ENCODE measurements at regions of chr6 and their contacts with region 1.

Region 1: GRCh38 chr6:85593438-85594196 is at the start of gene SNX14:
- DNase-seq: peak; percentile 60 to 90 (median 76)
- ATAC-seq: peak; percentile 82 to 84
- H3K4me3 Mint-ChIP-seq: peak within 1 kb of the TSS; percentile 92 to 99 (median 96)
- H3K27ac Mint-ChIP-seq: peak within 1 kb of the TSS; percentile 92 to 98 (median 98)
- H3K4me1 Mint-ChIP-seq: peaks cover 27 to 56% (median 49%) of the 10 kb centered on the region in 4 donors
- H3K27me3 Mint-ChIP-seq: no peaks in the 10 kb centered on the region
- polyA plus RNA-seq, gene SNX14: 40.9 to 54.6 (median 45.7) TPM

Region 2: GRCh38 chr6:85436411-85436810 is 157.2 kb before region 1 on chr6:
- POLR2A ChIA-PET with region 1: no interaction called
- DNase-seq: no peak
- ATAC-seq: no peak
- H3K4me3 Mint-ChIP-seq: no peak overlapping the region
- H3K27ac Mint-ChIP-seq: peak overlapping the region in 1 of 10 donors; percentile 32
- H3K4me1 Mint-ChIP-seq: peaks cover 0 to 3% (median 0%) of the 10 kb centered on the region in 4 donors
- H3K27me3 Mint-ChIP-seq: no peaks in the 10 kb centered on the region

Region 3: DNA sequence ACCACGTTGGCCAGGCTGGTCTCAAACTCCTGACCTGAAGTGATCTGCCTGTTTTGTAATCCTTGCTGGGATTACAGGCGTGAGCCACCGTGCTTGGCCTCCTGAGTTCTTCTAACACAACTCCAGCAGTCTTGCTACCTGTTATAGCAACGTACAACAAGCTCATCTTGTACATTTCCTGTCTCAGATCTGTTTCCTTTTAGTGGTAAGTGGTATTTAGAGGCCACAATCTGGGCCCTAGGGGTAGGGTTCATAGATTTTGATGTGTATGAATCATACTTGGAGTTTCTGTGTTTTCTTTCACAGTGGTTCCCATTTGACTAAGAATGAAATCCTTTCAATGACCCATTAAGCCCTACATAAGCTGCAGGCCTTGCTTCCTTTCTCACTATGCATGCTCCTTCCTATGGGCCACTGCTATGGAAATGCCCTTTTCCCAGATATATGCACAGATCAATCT is 76.1 kb after region 1 on chr6:
- POLR2A ChIA-PET with region 1: interaction called, 90 read pairs
- DNase-seq: peak in 8 of 10 donors; percentile 8 to 69 (median 34)
- ATAC-seq: peak; percentile 94 to 96
- H3K4me3 Mint-ChIP-seq: peak overlapping the region; percentile 45 to 83 (median 61)
- H3K27ac Mint-ChIP-seq: peak overlapping the region; percentile 38 to 97 (median 94)
- H3K4me1 Mint-ChIP-seq: peaks cover 28 to 61% (median 56%) of the 10 kb centered on the region in 4 donors
- H3K27me3 Mint-ChIP-seq: no peaks in the 10 kb centered on the region

Measured in naive thymus-derived CD8-positive, alpha-beta T cell (primary cell).